Panc1 (cell line): ENCODE measurements at regions of chr10 and their contacts with region 1.

Region 1: DNA sequence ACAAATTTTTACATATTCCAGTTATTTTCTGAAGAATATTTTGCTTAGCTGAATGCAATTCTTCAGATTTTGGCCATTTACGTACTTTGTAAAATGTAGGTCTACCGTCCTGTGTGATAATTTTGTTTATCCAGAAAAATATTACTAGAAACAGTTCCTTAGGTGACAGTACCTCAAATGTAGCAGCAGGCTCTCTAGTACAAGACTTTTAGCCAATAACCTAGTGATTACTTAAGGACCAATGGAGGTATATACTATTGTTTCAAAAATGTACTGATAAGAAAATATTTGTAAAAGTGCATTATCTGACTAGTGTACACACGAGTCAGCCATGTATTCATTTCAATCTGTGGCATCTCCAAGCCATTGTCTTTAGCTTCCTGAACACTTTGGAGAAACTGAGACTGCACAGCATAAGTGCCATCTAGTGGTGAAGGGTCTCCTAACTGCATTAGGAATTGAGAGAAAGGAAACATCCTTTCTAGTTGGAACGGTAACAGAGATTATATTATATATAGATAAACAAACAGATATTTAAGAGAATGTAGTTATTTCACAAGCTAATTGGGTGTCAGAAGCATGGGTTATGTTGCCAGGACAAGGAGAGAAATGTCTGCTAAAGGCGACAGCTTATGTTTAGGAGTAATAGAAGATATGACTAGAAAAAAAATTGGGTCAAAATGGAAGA is 23.7 kb downstream of the RTKN2 start:
- DNase-seq: no peak
- ATAC-seq: peak; percentile 81
- H3K4me3 ChIP-seq: no peak overlapping the region
- H3K27ac ChIP-seq: peak overlapping the region; percentile 92
- H3K4me1 ChIP-seq: peaks cover 47% of the 10 kb centered on the region
- H3K27me3 ChIP-seq: no peaks in the 10 kb centered on the region
- CTCF ChIP-seq: peak; percentile 85; the same call in 1 of the 2 replicates

Region 2: GRCh38 chr10:62038609-62039190 is 206.2 kb before region 1 on chr10:
- CTCF ChIA-PET with region 1: interaction called, 7 read pairs
- POLR2A ChIA-PET with region 1: interaction called, 3 read pairs
- in situ Hi-C with region 1: no loop called
- intact Hi-C with region 1: loop called (anchors 5 kb)
- DNase-seq: peak; percentile 69
- ATAC-seq: peak; percentile 82
- H3K4me3 ChIP-seq: no peak overlapping the region
- H3K27ac ChIP-seq: peak overlapping the region; percentile 87
- H3K4me1 ChIP-seq: peaks cover 59% of the 10 kb centered on the region
- H3K27me3 ChIP-seq: no peaks in the 10 kb centered on the region
- CTCF ChIP-seq: peak; percentile 92

Region 3: GRCh38 chr10:62166331-62167131 is 78.4 kb before region 1 on chr10:
- CTCF ChIA-PET with region 1: no interaction called
- POLR2A ChIA-PET with region 1: interaction called, 12 read pairs
- in situ Hi-C with region 1: no loop called
- intact Hi-C with region 1: no loop called
- DNase-seq: no peak
- ATAC-seq: peak; percentile 70
- H3K4me3 ChIP-seq: 0 out of 4 replicates have a peak overlapping the region, but pooled peaks of 1 of the 2 experiments have one; percentile 0
- H3K27ac ChIP-seq: peak overlapping the region; percentile 12; the same call in 1 of the 2 replicates
- H3K4me1 ChIP-seq: peaks cover 16% of the 10 kb centered on the region
- H3K27me3 ChIP-seq: no peaks in the 10 kb centered on the region
- CTCF ChIP-seq: no peak

Region 4: GRCh38 chr10:62511656-62512055 is 266.7 kb after region 1 on chr10:
- CTCF ChIA-PET with region 1: no interaction called
- POLR2A ChIA-PET with region 1: no interaction called
- in situ Hi-C with region 1: no loop called
- intact Hi-C with region 1: no loop called
- DNase-seq: no peak
- ATAC-seq: no peak
- H3K4me3 ChIP-seq: no peak overlapping the region
- H3K27ac ChIP-seq: no peak overlapping the region
- H3K4me1 ChIP-seq: no peaks in the 10 kb centered on the region
- H3K27me3 ChIP-seq: no peaks in the 10 kb centered on the region; the same call in 1 of the 2 replicates
- CTCF ChIP-seq: no peak